ENCODE measurements at regions of chr5 and their contacts with region 1.

Region 1: GRCh38 chr5:177071666-177072385 is 14.9 kb upstream of the FGFR4 start:
- DNase-seq: peak; percentile 71
- H3K27ac ChIP-seq: no peak overlapping the region
- CTCF ChIP-seq: peak; percentile 97

Region 2: DNA sequence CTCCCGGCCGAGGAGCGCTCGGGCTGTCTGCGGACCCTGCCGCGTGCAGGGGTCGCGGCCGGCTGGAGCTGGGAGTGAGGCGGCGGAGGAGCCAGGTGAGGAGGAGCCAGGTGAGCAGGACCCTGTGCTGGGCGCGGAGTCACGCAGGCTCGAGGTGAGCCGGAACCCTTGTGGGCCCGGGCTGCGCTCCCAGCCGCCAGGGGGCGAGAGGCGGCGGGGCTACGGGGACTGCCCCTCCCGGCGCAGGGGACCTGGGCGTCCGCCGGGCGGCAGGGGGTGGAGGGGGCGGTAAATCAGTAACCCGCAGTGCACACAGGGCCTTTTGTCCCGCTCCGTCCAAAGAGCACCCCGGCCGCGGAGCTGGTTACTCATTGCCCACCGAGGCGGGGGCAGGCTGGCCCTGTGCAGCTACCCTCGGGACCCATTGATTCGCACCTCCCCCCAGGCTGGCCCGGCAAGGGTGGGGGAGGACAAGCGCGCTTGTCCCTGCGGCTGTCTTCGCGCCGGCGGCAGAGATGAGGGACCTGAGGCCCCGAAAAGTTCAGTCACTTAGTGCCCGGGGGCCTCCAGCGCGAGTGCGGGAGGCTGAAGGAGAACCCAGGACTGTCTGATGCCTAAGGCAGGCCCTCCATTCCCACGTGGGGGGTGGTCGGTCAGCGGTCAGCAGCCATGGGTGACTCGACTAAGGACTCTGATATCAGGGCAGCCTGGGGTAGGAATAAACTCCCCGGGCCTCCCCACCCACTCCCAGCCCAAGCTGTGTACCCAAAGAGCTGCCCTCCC is 15.3 kb after region 1 on chr5:
- CTCF ChIA-PET with region 1: interaction called, 14 read pairs
- POLR2A ChIA-PET with region 1: no interaction called
- DNase-seq: peak; percentile 58
- H3K27ac ChIP-seq: no peak overlapping the region
- CTCF ChIP-seq: peak; percentile 73

Region 3: GRCh38 chr5:177093082-177093712 is 21.4 kb after region 1 on chr5:
- CTCF ChIA-PET with region 1: interaction called, 10 read pairs
- POLR2A ChIA-PET with region 1: no interaction called
- DNase-seq: no peak
- H3K27ac ChIP-seq: no peak overlapping the region
- CTCF ChIP-seq: no peak

Region 4: GRCh38 chr5:177103523-177104253 is 31.9 kb after region 1 on chr5:
- CTCF ChIA-PET with region 1: no interaction called
- POLR2A ChIA-PET with region 1: no interaction called
- DNase-seq: no peak
- H3K27ac ChIP-seq: no peak overlapping the region
- CTCF ChIP-seq: no peak

Region 5: DNA sequence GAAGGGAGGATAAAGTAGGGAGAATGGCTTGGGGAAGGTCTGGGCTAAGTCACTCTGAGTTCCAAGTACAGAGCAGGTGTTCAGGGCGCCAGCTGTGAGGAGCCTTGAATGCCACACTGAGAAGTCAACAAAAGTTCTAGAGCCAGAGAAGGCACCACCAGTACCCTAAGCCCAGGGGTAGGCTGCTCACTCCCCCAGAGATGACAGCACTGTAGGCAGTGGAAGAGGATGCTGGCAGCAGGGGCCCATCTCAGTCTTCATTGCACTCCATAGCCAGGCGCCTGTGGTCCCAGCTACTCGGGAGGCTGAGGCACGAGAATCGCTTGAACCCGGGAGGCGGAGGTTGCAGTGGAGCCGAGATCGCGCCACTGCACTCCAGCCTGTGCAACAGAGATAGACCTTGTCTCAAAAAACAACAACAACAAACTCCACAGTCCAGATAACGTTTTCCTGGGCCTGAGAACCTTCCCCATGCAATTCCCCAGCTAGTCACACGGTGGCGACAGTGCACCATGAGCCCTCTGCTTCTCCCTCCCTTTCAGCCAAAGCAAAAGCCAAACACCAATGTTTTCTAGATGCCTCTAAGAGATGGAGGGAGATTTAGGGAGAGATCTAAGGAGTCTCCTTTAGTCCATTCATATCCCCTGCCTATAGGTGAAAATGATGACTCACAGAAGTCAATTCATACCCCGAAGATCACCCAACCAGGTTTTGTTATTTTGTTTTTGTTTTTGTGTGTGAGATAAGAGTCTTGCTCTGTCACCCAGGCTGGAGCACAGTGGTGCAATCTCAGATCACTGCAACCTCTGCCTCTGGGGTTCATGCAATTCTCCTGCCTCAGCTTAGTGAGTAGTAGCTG is 42.0 kb after region 1 on chr5:
- CTCF ChIA-PET with region 1: interaction called, 30 read pairs
- POLR2A ChIA-PET with region 1: no interaction called
- DNase-seq: peak; percentile 94
- H3K27ac ChIP-seq: no peak overlapping the region
- CTCF ChIP-seq: peak; percentile 100